ENCODE measurements at regions of chr3 and their contacts with region 1.

Region 1: GRCh38 chr3:124995460-124995994 is 60.3 kb downstream of the HEG1 start:
- DNase-seq: peak; percentile 70
- ATAC-seq: peak; percentile 87
- H3K4me3 Mint-ChIP-seq: no peak overlapping the region
- H3K27ac Mint-ChIP-seq: peak overlapping the region; percentile 54
- H3K4me1 Mint-ChIP-seq: peaks cover 20% of the 10 kb centered on the region
- H3K27me3 Mint-ChIP-seq: no peaks in the 10 kb centered on the region

Region 2: DNA sequence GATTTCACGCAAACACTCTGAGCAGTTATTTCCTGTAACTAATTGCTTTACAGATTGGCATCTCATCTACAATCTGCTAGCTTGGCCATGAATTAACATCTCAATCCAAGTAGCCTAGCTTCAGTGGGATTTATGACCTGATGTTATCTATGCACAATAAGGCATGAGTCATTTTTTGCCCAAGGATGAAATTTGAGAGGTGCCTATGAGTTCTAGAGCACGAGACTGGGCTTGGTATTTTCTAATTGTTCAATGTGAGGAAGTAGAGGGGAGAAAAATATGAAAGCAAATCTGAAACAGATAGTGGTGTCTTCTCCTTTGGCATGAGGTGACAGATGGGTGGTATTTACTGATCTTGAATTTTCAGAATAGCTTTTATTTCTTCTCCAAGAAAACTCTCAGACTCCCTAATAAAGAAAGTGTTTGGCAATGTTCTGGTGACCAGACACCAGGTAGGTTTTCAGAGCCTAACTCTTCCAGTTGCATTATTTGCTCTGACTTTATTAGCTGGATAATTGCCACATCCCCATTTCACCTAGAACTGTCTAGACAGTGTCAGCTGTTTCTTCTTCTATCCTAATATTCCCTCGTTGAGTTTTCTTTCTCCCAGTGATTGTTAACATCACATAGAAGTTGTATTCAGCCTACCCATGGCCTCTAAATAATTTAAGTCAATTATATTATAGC is 566.3 kb before region 1 on chr3:
- CTCF ChIA-PET with region 1: no interaction called
- POLR2A ChIA-PET with region 1: no interaction called
- DNase-seq: no peak
- ATAC-seq: no peak
- H3K4me3 Mint-ChIP-seq: no peak overlapping the region
- H3K27ac Mint-ChIP-seq: no peak overlapping the region
- H3K4me1 Mint-ChIP-seq: no peaks in the 10 kb centered on the region
- H3K27me3 Mint-ChIP-seq: peaks cover 24% of the 10 kb centered on the region

Region 3: GRCh38 chr3:125585595-125586223 is 590.2 kb after region 1 on chr3:
- CTCF ChIA-PET with region 1: interaction called, 13 read pairs
- POLR2A ChIA-PET with region 1: no interaction called
- DNase-seq: peak; percentile 65
- ATAC-seq: peak; percentile 65
- H3K4me3 Mint-ChIP-seq: no peak overlapping the region
- H3K27ac Mint-ChIP-seq: no peak overlapping the region
- H3K4me1 Mint-ChIP-seq: peaks cover 8% of the 10 kb centered on the region
- H3K27me3 Mint-ChIP-seq: no peaks in the 10 kb centered on the region

Measured in activated CD8-positive, alpha-beta T cell treated with anti-CD3 and anti-CD28 coated beads, Interleukin-2, amount 10 ng/mL, durations not matched to agents 7 days and 5 days (primary cell).